ENCODE measurements at regions of chr12 and their contacts with region 1.

Region 1: DNA sequence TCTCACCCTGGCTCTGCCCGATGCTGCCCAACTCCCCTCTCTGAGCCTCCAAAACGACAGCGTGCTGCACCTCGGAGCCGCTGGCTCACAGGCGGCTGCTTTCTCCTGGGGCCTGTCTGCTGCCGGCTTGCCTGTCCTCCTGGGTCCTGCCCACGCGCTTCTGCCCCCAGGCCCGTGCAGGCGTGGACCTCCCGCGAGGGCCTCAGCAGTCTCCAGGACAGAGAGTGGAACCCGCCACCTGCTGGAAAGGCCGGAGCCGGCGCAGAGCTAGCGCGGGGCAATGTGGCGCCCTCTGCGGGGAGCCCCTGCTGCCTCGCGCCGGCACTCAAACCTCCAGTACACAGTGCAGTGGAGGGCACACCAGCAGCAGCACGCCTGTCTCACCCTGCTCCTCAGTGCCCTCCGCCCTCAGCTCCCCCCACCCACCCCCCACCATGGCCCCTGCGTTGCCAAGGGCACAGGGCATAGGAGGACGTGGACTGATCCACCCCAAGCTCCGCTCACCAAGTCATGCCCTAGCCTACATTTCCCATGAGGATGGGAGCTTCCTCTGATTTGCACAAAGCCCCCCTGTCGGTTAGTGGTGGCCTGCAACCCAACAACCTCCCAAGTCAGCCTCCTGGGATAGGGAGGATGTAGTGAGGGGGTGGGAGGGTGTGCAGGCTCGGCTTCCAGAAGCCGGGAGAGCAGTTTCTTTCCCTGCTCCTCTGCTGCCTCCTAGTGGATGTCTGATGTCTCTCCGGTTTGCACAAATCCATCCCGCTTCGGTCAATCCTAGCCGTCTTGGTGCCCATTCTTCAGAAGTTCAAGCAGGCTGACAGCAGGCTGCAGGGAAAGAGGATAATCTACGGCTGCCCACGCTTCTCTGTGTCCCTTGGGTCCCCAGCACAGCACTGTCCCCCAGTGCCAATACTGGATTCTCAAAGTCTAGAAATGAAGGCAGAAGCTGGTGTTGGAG is 25.2 kb downstream of the KRT8 start:
- DNase-seq: peak; percentile 94
- H3K4me3 Mint-ChIP-seq: peak overlapping the region; percentile 48
- H3K27ac Mint-ChIP-seq: no peak overlapping the region
- H3K4me1 Mint-ChIP-seq: peaks cover 48% of the 10 kb centered on the region
- H3K27me3 Mint-ChIP-seq: no peaks in the 10 kb centered on the region
- CTCF ChIP-seq: peak; percentile 89

Region 2: GRCh38 chr12:52213512-52214420 is 665.9 kb before region 1 on chr12:
- CTCF ChIA-PET with region 1: interaction called, 7 read pairs
- POLR2A ChIA-PET with region 1: no interaction called
- intact Hi-C with region 1: loop called (anchors 10 kb)
- DNase-seq: peak; percentile 85
- H3K4me3 Mint-ChIP-seq: no peak overlapping the region
- H3K27ac Mint-ChIP-seq: no peak overlapping the region
- H3K4me1 Mint-ChIP-seq: peaks cover 71% of the 10 kb centered on the region
- H3K27me3 Mint-ChIP-seq: no peaks in the 10 kb centered on the region
- CTCF ChIP-seq: peak; percentile 95

Region 3: DNA sequence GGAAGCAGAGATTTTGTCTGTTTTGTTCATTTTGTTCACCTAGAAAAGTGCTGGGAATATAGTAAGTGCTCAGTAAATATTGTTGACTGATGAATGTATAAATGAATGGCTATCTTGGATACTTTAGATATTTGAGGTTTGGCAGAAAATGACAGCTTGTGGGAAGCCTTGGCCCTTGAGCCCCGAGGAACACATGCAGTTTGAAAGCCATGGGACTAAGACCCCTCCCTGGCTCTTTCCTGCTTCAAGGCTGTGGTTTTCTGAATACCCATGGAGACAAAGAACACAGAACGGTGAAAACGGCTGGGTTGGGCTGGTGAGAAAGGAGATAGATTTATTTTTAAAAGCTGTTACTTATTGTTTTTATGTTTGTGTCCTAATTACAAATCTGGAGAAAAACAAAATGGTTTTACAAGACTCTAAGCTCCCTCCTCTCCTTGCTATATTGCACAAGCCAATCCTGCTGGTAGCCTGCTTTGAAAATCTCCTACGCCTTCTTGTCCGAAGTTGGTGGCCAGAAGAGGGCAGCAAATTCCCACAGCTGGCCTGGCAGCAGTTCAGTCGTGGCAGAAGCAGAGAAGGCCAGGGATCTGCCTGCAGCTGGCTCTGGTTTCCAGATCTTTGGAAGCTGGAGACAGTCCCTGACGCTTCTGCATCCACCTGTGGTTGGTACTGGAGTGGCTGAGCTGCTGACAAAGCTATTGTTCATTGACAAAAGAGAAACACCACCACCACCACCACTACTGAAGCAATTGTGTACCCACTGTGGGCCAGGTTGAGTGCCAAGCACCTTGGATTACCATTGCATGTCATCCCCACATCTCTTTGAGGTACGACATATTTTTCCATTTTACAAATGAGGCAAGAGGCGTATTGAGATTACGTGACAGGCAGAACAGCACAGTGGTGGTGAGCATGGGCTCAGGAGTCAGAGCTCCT is 507.2 kb before region 1 on chr12:
- CTCF ChIA-PET with region 1: interaction called, 174 read pairs
- POLR2A ChIA-PET with region 1: interaction called, 17 read pairs
- intact Hi-C with region 1: loop called (anchors 1 kb)
- DNase-seq: peak; percentile 86
- H3K4me3 Mint-ChIP-seq: no peak overlapping the region
- H3K27ac Mint-ChIP-seq: no peak overlapping the region
- H3K4me1 Mint-ChIP-seq: no peaks in the 10 kb centered on the region
- H3K27me3 Mint-ChIP-seq: peaks cover 11% of the 10 kb centered on the region
- CTCF ChIP-seq: peak; percentile 90

Region 4: GRCh38 chr12:52495389-52495788 is 384.3 kb before region 1 on chr12:
- CTCF ChIA-PET with region 1: interaction called, 17 read pairs
- POLR2A ChIA-PET with region 1: interaction called, 141 read pairs
- intact Hi-C with region 1: no loop called
- DNase-seq: peak; percentile 95
- H3K4me3 Mint-ChIP-seq: peak overlapping the region; percentile 93
- H3K27ac Mint-ChIP-seq: peak overlapping the region; percentile 95
- H3K4me1 Mint-ChIP-seq: peaks cover 64% of the 10 kb centered on the region
- H3K27me3 Mint-ChIP-seq: no peaks in the 10 kb centered on the region
- CTCF ChIP-seq: no peak

Region 5: DNA sequence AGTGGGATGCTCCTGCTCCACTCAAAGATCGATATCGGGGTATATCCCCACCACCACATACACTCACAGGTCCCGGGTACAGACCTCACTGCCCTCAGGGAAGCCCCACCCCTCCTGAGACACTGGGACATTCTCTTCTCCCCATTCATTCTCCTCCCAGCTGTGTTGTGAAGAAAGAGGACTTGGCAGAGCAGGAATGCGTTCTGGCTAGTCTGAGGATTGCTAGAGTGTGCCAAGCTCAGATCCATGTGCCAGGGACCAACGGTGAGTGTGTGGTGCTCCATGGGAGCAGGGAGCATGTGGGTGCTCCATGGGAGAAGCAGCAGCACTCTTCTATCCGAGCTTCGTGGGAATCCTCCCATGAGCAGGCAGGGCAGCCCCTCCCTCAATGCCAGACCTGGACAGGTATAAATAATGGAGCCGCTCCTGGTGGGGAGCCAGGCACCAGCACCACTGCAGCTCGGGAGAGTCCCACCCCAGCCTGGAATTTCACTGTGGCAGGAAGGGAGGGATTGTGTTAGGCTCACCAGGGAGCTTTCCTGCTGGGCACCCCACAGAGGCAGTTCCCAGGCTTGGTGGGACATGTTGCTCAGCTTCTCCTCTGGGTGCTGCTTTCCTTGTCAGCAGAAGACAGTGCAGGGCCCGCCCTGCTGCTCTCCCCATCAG is 357.2 kb before region 1 on chr12:
- CTCF ChIA-PET with region 1: interaction called, 77 read pairs
- POLR2A ChIA-PET with region 1: interaction called, 675 read pairs
- intact Hi-C with region 1: no loop called
- DNase-seq: peak; percentile 98
- H3K4me3 Mint-ChIP-seq: peak overlapping the region; percentile 80
- H3K27ac Mint-ChIP-seq: peak overlapping the region; percentile 96
- H3K4me1 Mint-ChIP-seq: peaks cover 44% of the 10 kb centered on the region
- H3K27me3 Mint-ChIP-seq: no peaks in the 10 kb centered on the region
- CTCF ChIP-seq: no peak

Region 6: DNA sequence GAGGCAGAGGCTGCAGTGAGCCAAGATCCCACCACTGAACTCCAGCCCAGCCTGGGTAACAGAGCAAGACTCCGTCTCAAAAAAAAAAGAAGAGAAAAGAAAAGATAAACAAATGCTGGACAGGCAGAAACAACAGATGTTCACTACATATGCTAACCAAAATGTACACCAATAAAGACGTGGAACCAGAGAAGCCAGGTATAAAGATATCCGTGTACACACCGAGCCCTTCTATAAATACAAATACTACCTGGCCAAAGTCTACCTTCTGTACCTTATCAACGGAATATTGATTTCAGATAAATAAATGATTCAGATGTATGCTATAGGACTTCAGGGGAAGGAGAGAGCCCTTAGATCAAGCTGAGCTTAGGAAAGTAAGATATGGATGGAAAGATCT is 36.0 kb after region 1 on chr12:
- CTCF ChIA-PET with region 1: no interaction called
- POLR2A ChIA-PET with region 1: no interaction called
- intact Hi-C with region 1: no loop called
- DNase-seq: no peak
- H3K4me3 Mint-ChIP-seq: no peak overlapping the region
- H3K27ac Mint-ChIP-seq: no peak overlapping the region
- H3K4me1 Mint-ChIP-seq: peaks cover 6% of the 10 kb centered on the region
- H3K27me3 Mint-ChIP-seq: peaks cover 23% of the 10 kb centered on the region
- CTCF ChIP-seq: no peak

Region 7: GRCh38 chr12:52980693-52981423 is 101.2 kb after region 1 on chr12:
- CTCF ChIA-PET with region 1: interaction called, 747 read pairs
- POLR2A ChIA-PET with region 1: interaction called, 23 read pairs
- intact Hi-C with region 1: no loop called
- DNase-seq: peak; percentile 96
- H3K4me3 Mint-ChIP-seq: no peak overlapping the region
- H3K27ac Mint-ChIP-seq: no peak overlapping the region
- H3K4me1 Mint-ChIP-seq: peaks cover 7% of the 10 kb centered on the region
- H3K27me3 Mint-ChIP-seq: no peaks in the 10 kb centered on the region
- CTCF ChIP-seq: peak; percentile 95